CD4-positive, alpha-beta T cell (primary cell): ENCODE measurements at regions of chr2 and their contacts with region 1.

Region 1: DNA sequence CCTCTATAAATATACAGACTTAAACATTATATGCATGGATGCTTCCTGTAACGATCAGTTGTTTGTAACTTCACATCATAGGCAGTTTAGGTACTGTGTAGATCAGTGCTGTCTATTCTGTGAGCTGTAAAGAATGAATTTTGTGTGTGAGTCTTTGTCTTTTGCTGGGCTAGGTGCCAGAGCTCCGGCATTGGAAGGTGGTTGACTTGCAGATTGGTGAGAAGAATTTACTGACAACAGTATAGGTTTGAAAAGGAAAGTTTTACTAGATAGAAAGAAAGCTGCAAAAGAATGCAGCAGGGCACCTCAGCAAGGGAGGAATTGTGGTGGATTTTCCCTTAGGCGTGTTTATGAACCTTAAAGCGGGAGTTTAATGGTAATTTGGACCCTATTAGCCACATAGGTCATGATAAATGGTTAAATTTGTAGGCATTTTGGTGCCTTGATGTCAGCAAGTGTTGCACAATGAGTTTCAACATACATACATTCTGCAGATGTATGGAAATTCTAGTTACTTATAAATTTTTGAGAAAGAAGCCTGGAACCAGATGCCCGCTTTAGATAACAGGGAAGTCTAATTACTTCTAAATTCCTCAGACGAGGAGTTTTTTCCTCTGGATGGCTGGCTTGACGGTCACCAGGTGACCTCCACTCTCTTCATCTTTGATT is 6.7 kb upstream of the QPCT start:
- DNase-seq: no peak
- ATAC-seq: no peak
- H3K4me3 ChIP-seq: no peak overlapping the region
- H3K4me3 Mint-ChIP-seq: no peak overlapping the region
- H3K27ac ChIP-seq: no peak overlapping the region
- H3K27ac Mint-ChIP-seq: no peak overlapping the region
- H3K4me1 ChIP-seq: no peaks in the 10 kb centered on the region
- H3K4me1 Mint-ChIP-seq: no peaks in the 10 kb centered on the region
- H3K27me3 ChIP-seq: no peaks in the 10 kb centered on the region
- H3K27me3 Mint-ChIP-seq: no peaks in the 10 kb centered on the region
- CTCF ChIP-seq: no peak

Region 2: GRCh38 chr2:36770542-36771287 is 567.1 kb before region 1 on chr2:
- CTCF ChIA-PET with region 1: no interaction called
- POLR2A ChIA-PET with region 1: no interaction called
- intact Hi-C with region 1: no loop called
- DNase-seq: peak in 11 of 14 experiments; percentile 3 to 59 (median 12)
- ATAC-seq: no peak
- H3K4me3 ChIP-seq: no peak overlapping the region
- H3K4me3 Mint-ChIP-seq: no peak overlapping the region
- H3K27ac ChIP-seq: no peak overlapping the region
- H3K27ac Mint-ChIP-seq: no peak overlapping the region
- H3K4me1 ChIP-seq: no peaks in the 10 kb centered on the region
- H3K4me1 Mint-ChIP-seq: no peaks in the 10 kb centered on the region
- H3K27me3 ChIP-seq: peaks cover 0 to 2% of the 10 kb centered on the region in 2 experiments
- H3K27me3 Mint-ChIP-seq: peaks cover 10% of the 10 kb centered on the region
- CTCF ChIP-seq: peak; percentile 19

Region 3: GRCh38 chr2:37090019-37090477 is 247.7 kb before region 1 on chr2:
- CTCF ChIA-PET with region 1: no interaction called
- POLR2A ChIA-PET with region 1: no interaction called
- intact Hi-C with region 1: no loop called
- DNase-seq: no peak
- ATAC-seq: no peak
- H3K4me3 ChIP-seq: no peak overlapping the region
- H3K4me3 Mint-ChIP-seq: no peak overlapping the region
- H3K27ac ChIP-seq: no peak overlapping the region
- H3K27ac Mint-ChIP-seq: no peak overlapping the region
- H3K4me1 ChIP-seq: peaks cover 10% of the 10 kb centered on the region
- H3K4me1 Mint-ChIP-seq: no peaks in the 10 kb centered on the region
- H3K27me3 ChIP-seq: no peaks in the 10 kb centered on the region
- H3K27me3 Mint-ChIP-seq: no peaks in the 10 kb centered on the region
- CTCF ChIP-seq: no peak

Region 4: DNA sequence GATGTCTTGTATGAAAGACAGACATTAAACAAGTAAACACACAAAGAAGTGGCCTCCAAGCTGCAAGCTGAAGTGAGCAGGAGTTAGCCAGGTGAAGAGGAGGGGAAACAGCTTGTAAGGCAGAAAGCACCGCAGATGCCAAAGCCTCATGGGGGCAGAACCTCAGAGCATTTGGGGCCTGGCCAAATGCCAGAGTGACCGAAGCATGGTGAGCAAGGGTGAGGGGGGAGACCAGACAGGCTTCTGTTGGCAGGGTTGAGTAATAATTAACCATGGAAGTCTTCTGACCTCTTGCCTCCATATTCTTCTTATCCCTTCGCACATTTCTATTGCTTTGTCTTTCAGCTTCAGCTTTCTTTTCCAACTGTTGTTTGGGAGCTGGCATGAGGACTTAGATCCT is 12.3 kb after region 1 on chr2:
- CTCF ChIA-PET with region 1: interaction called, 13 read pairs
- POLR2A ChIA-PET with region 1: no interaction called
- intact Hi-C with region 1: no loop called
- DNase-seq: no peak
- ATAC-seq: no peak
- H3K4me3 ChIP-seq: no peak overlapping the region
- H3K4me3 Mint-ChIP-seq: no peak overlapping the region
- H3K27ac ChIP-seq: no peak overlapping the region
- H3K27ac Mint-ChIP-seq: no peak overlapping the region
- H3K4me1 ChIP-seq: peaks cover 5% of the 10 kb centered on the region
- H3K4me1 Mint-ChIP-seq: peaks cover 9% of the 10 kb centered on the region
- H3K27me3 ChIP-seq: peaks cover 0 to 7% of the 10 kb centered on the region in 2 experiments
- H3K27me3 Mint-ChIP-seq: peaks cover 48% of the 10 kb centered on the region
- CTCF ChIP-seq: no peak